ENCODE measurements at regions of chr14 and their contacts with region 1.

Region 1: DNA sequence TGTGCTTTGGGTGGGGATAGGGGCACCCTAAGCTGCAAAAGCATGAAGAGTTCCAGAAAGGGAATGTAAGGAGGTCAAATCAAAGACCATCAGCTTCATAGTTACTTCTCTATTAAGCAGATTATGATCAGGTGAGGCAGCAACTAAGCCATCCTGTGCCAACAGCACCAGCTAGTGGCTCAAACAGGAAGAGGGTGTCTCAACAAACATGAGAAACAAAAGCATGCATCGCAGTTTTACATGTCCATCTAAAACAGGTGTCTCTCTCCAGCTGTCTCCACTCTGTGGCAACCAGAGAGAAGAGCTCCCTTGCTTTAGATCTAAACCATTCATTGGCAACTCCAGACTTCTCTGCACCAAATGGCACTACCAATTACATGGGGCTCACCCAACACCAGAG is 52.9 kb downstream of the ACTN1 start:
- DNase-seq: peak; percentile 49
- H3K4me3 Mint-ChIP-seq: no peak overlapping the region
- H3K27ac Mint-ChIP-seq: no peak overlapping the region
- H3K4me1 Mint-ChIP-seq: peaks cover 59% of the 10 kb centered on the region
- H3K27me3 Mint-ChIP-seq: no peaks in the 10 kb centered on the region

Region 2: GRCh38 chr14:68834816-68835215 is 91.4 kb before region 1 on chr14:
- CTCF ChIA-PET with region 1: no interaction called
- intact Hi-C with region 1: no loop called
- DNase-seq: no peak
- H3K4me3 Mint-ChIP-seq: no peak overlapping the region
- H3K27ac Mint-ChIP-seq: no peak overlapping the region
- H3K4me1 Mint-ChIP-seq: peaks cover 2% of the 10 kb centered on the region
- H3K27me3 Mint-ChIP-seq: no peaks in the 10 kb centered on the region

Region 3: GRCh38 chr14:68939893-68940613 is 13.8 kb after region 1 on chr14:
- CTCF ChIA-PET with region 1: interaction called, 6 read pairs
- intact Hi-C with region 1: loop called (anchors 1 kb)
- DNase-seq: no peak
- H3K4me3 Mint-ChIP-seq: no peak overlapping the region
- H3K27ac Mint-ChIP-seq: no peak overlapping the region
- H3K4me1 Mint-ChIP-seq: peaks cover 70% of the 10 kb centered on the region
- H3K27me3 Mint-ChIP-seq: no peaks in the 10 kb centered on the region